Vagina (tissue), 2 donors: ENCODE measurements at regions of chr11 and their contacts with region 1.

Region 1: GRCh38 chr11:77187776-77188632 is 60.0 kb downstream of the MYO7A start:
- DNase-seq: no peak
- H3K4me3 ChIP-seq: no peak overlapping the region
- H3K27ac ChIP-seq: no peak overlapping the region
- H3K4me1 ChIP-seq: peaks cover 3% of the 10 kb centered on the region
- H3K27me3 ChIP-seq: no peaks in the 10 kb centered on the region
- CTCF ChIP-seq: peak; percentile 72 to 88 (median 84)
- POLR2A ChIP-seq: no peak

Region 2: GRCh38 chr11:77047007-77047927 is 140.7 kb before region 1 on chr11:
- intact Hi-C with region 1: loop called (anchors 10 kb)
- DNase-seq: no peak
- H3K4me3 ChIP-seq: peak overlapping the region; percentile 23 to 29
- H3K27ac ChIP-seq: no peak overlapping the region
- H3K4me1 ChIP-seq: peaks cover 9% of the 10 kb centered on the region
- H3K27me3 ChIP-seq: no peaks in the 10 kb centered on the region
- CTCF ChIP-seq: peak; percentile 33 to 71 (median 69)
- POLR2A ChIP-seq: no peak

Region 3: DNA sequence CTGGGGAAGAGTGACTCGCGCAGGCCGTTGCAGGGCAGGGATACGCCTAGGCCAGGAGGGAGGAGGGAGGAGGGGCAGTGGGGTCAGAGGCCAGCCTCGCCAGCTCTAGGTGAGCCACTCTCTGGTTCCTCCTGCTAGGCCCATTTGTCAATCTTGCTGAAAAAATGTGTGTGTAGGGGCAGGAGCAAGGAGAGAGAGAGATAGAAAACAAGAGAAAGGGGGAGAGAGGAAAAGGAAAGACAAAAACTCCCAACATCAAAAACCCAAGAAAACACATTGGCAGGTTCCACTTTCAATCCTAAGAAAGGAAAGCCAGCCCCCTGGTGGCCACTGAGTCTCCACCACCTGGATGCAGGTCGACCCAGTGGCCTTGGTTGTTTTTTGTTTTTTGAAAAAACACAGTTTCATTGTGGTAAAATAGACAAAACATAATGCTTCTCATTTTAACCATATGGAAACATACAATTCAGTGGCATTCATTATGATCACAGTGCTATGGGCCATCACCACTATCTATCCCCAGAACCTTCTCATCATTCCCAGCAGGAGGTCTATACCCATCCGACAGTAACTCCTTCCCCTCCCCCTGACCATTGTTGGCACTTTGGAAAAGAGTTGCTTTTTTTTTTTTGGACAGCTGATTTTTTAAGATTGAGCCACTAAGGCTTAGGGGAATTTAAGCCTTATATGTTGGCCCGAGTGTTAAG is 74.5 kb before region 1 on chr11:
- intact Hi-C with region 1: no loop called
- DNase-seq: no peak
- H3K4me3 ChIP-seq: no peak overlapping the region
- H3K27ac ChIP-seq: no peak overlapping the region
- H3K4me1 ChIP-seq: no peaks in the 10 kb centered on the region
- H3K27me3 ChIP-seq: no peaks in the 10 kb centered on the region
- CTCF ChIP-seq: peak in 1 of 3 experiments; percentile 14
- POLR2A ChIP-seq: no peak

Region 4: GRCh38 chr11:77127232-77127911 is 60.6 kb before region 1 on chr11:
- intact Hi-C with region 1: loop called (anchors 5 kb)
- DNase-seq: no peak
- H3K4me3 ChIP-seq: peak overlapping the region; percentile 30 to 47
- H3K27ac ChIP-seq: no peak overlapping the region
- H3K4me1 ChIP-seq: peaks cover 26% of the 10 kb centered on the region
- H3K27me3 ChIP-seq: no peaks in the 10 kb centered on the region
- CTCF ChIP-seq: peak; percentile 96 to 99 (median 98)
- POLR2A ChIP-seq: no peak

Region 5: DNA sequence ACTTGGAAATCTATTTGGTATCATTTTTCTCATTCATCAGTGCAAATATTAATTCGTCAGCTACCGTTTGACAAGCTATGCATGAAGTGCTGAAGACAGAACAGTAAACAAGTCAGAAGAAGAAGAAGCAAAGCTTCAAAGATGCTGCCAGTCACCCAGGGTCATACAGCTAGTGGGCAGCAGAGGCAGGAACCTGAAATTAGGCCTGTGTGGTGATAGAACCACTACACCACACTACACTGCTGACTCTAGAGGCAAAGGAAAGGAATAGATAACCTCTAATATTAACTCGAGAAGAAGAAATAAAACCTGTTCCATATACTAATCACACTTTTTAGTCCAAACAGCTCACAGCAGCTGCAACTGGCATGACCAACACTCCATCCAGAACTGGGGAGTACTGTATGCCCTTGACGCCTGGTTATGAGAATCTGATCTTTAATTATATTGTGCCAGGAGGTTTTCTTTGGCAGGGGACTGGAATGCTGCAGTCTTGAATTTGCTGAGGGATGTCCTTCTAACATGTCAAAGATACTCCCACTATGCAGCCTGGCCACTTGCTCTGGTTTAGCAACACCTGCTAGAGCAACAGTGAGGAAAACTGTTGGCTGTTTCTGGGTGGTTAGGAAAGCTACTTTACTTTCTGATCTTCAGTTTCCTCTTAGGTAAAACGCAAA is 212.9 kb after region 1 on chr11:
- intact Hi-C with region 1: no loop called
- DNase-seq: no peak
- H3K4me3 ChIP-seq: no peak overlapping the region
- H3K27ac ChIP-seq: no peak overlapping the region
- H3K4me1 ChIP-seq: no peaks in the 10 kb centered on the region
- H3K27me3 ChIP-seq: no peaks in the 10 kb centered on the region
- CTCF ChIP-seq: no peak
- POLR2A ChIP-seq: no peak

Region 6: GRCh38 chr11:77547863-77548551 is 360.0 kb after region 1 on chr11:
- intact Hi-C with region 1: loop called (anchors 10 kb)
- DNase-seq: no peak
- H3K4me3 ChIP-seq: no peak overlapping the region
- H3K27ac ChIP-seq: no peak overlapping the region
- H3K4me1 ChIP-seq: no peaks in the 10 kb centered on the region
- H3K27me3 ChIP-seq: no peaks in the 10 kb centered on the region
- CTCF ChIP-seq: peak in 2 of 3 experiments; percentile 32 to 63
- POLR2A ChIP-seq: no peak